Activated CD4-positive, alpha-beta memory T cell treated with anti-CD3 and anti-CD28 coated beads for 36 hours (primary cell): ENCODE measurements at regions of chr5 and their contacts with region 1.

Region 1: GRCh38 chr5:137778772-137779564 is 24.8 kb upstream of the HNRNPA0 start:
- DNase-seq: no peak
- H3K4me3 Mint-ChIP-seq: no peak overlapping the region
- H3K27ac Mint-ChIP-seq: no peak overlapping the region
- H3K4me1 Mint-ChIP-seq: no peaks in the 10 kb centered on the region
- H3K27me3 Mint-ChIP-seq: peaks cover 1% of the 10 kb centered on the region

Region 2: GRCh38 chr5:137660349-137660817 is 118.6 kb before region 1 on chr5:
- CTCF ChIA-PET with region 1: interaction called, 13 read pairs
- POLR2A ChIA-PET with region 1: no interaction called
- intact Hi-C with region 1: no loop called
- DNase-seq: peak; percentile 82
- H3K4me3 Mint-ChIP-seq: no peak overlapping the region
- H3K27ac Mint-ChIP-seq: no peak overlapping the region
- H3K4me1 Mint-ChIP-seq: peaks cover 8% of the 10 kb centered on the region
- H3K27me3 Mint-ChIP-seq: no peaks in the 10 kb centered on the region

Region 3: GRCh38 chr5:137791387-137791786 is 12.4 kb after region 1 on chr5:
- CTCF ChIA-PET with region 1: interaction called, 12 read pairs
- POLR2A ChIA-PET with region 1: no interaction called
- intact Hi-C with region 1: no loop called
- DNase-seq: no peak
- H3K4me3 Mint-ChIP-seq: no peak overlapping the region
- H3K27ac Mint-ChIP-seq: no peak overlapping the region
- H3K4me1 Mint-ChIP-seq: no peaks in the 10 kb centered on the region
- H3K27me3 Mint-ChIP-seq: peaks cover 2% of the 10 kb centered on the region

Region 4: DNA sequence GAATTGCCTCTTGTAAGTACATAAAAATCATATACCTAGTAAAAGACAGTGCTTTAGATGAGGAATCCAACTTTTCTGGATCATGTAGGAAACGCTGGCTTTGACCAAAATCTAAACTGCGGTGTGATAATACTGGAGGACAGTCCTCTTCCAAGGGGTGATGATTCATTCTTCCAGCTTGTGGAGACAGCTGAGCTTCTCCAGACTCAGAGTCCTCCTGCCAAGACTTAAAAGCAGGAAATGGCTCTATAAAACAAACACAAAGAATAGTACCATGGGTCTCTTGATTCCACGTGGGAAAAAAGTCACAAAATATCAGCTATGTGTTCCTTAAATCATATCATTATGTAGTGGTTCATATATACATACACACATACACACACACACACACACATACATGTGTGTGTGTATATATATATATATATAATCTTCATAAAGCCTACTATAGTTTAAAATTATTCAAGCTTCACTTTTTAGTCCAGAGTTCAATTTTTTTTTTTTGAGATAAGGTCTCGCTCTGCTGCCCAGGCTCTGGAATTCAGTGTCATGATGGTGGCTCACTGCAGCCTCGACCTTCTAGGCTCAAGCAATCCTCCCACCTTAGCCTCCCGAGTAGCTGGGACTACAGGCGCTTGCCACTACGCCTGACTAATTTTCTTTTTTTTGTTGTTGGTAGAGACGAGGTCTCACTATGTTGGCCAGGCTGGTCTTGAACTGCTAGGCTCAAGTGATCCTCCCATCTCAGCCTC is 175.3 kb after region 1 on chr5:
- CTCF ChIA-PET with region 1: interaction called, 13 read pairs
- POLR2A ChIA-PET with region 1: no interaction called
- intact Hi-C with region 1: no loop called
- DNase-seq: no peak
- H3K4me3 Mint-ChIP-seq: no peak overlapping the region
- H3K27ac Mint-ChIP-seq: no peak overlapping the region
- H3K4me1 Mint-ChIP-seq: no peaks in the 10 kb centered on the region
- H3K27me3 Mint-ChIP-seq: no peaks in the 10 kb centered on the region

Region 5: DNA sequence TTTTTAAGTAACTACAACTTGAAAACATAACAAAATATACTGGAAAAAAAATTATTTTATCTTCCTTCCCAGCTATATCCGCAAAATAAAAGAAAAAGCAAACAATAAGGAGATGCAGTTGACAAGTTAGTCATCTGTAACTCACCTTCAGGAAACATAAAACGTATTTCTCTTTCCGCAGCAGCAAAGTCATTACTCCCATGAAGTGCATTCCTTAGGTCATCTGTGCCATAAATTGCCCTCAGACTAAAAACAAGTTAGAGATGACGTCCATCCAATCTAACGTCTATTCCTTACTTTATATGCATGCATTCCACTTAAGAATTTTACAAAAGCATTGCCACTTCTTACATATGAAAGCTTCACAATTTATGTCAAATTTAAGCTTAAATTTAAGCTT is 349.4 kb after region 1 on chr5:
- CTCF ChIA-PET with region 1: interaction called, 30 read pairs
- POLR2A ChIA-PET with region 1: no interaction called
- intact Hi-C with region 1: loop called (anchors 2 kb)
- DNase-seq: no peak
- H3K4me3 Mint-ChIP-seq: no peak overlapping the region
- H3K27ac Mint-ChIP-seq: no peak overlapping the region
- H3K4me1 Mint-ChIP-seq: peaks cover 2% of the 10 kb centered on the region
- H3K27me3 Mint-ChIP-seq: peaks cover 3% of the 10 kb centered on the region

Region 6: DNA sequence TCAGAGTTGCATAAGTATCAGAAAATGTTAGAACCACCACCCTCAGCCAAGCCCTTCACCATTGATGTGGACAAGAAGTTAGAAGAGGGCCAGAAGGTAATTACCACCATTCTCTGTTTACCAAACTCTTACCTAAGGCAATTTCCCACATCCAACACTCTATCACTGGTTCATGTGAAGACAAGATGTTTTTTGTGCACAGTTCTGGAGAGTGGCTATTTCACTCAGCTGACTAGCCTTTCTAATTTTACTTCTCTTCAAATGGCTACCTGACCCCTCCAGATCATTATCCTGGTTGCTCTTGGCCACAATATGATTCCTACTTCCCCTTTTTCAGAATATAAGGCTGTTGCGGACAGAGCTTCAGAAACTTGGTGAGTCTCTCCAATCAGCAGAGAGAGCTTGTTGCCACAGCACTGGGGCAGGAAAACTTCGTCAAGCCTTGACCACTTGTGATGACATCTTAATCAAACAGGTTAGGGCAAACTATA is 407.0 kb after region 1 on chr5:
- CTCF ChIA-PET with region 1: no interaction called
- POLR2A ChIA-PET with region 1: no interaction called
- intact Hi-C with region 1: no loop called
- DNase-seq: no peak
- H3K4me3 Mint-ChIP-seq: no peak overlapping the region
- H3K27ac Mint-ChIP-seq: no peak overlapping the region
- H3K4me1 Mint-ChIP-seq: no peaks in the 10 kb centered on the region
- H3K27me3 Mint-ChIP-seq: no peaks in the 10 kb centered on the region